PC-3 (cell line): ENCODE measurements at regions of chr17 and their contacts with region 1.

Region 1: GRCh38 chr17:45317112-45317928 is 500 bp upstream of the MAP3K14 start:
- DNase-seq: peak; percentile 100
- ATAC-seq: peak; percentile 49
- H3K4me3 ChIP-seq: peak overlapping the region; percentile 78
- H3K27ac ChIP-seq: peak overlapping the region; percentile 94
- H3K4me1 ChIP-seq: peaks cover 82% of the 10 kb centered on the region
- H3K27me3 ChIP-seq: no peaks in the 10 kb centered on the region
- CTCF ChIP-seq: 0 out of 2 replicates have a peak, but pooled peaks have one; percentile 19

Region 2: GRCh38 chr17:44947461-44948314 is 369.6 kb before region 1 on chr17 and contains the start of gene KIF18B:
- CTCF ChIA-PET with region 1: no interaction called
- POLR2A ChIA-PET with region 1: no interaction called
- intact Hi-C with region 1: no loop called
- DNase-seq: peak; percentile 99
- ATAC-seq: peak; percentile 97
- H3K4me3 ChIP-seq: peak within 1 kb of the TSS; percentile 87
- H3K27ac ChIP-seq: peak within 1 kb of the TSS; percentile 72
- H3K4me1 ChIP-seq: peaks cover 36% of the 10 kb centered on the region
- H3K27me3 ChIP-seq: no peaks in the 10 kb centered on the region
- CTCF ChIP-seq: peak; percentile 37; the same call in 1 of the 2 replicates
- total RNA-seq, gene KIF18B: 25.0 and 28.5 TPM in 2 replicates

Region 3: DNA sequence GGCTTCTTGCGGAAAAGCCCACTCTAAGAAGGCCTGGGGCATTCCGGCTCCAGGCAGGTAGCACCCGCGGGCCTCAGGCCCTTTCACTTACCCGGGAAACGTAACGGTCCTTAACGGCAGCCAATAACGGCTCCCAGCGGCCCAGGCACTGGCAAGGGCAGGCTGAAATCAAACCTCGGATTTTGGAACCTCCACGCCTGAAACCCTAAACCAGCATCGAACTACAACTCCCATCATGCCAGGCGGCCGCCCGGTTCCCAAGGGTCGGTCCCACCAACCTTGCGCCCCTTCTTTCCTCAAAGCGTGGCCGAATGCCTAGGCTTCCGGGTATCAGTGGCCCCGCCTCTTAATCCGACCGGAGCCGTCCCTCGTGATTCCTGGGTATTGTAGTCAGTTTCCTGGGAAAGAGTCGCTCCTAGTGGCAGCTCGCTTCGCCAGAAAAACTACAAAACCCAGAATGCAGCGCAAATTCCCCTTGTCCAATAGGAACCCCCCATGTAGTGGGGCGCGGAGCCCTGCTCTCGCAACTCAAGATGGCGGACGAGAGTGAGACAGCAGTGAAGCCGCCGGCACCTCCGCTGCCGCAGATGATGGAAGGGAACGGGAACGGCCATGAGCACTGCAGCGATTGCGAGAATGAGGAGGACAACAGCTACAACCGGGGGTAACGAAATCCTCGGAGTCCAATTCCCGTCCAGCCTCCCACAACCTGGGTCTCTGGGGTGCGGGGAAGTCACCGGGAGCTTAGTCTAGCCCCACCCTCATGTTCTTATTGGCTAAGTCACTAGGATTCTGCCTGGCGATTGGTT is 256.3 kb before region 1 on chr17 and contains the start of gene NMT1:
- CTCF ChIA-PET with region 1: no interaction called
- POLR2A ChIA-PET with region 1: no interaction called
- intact Hi-C with region 1: no loop called
- DNase-seq: peak; percentile 100
- ATAC-seq: peak; percentile 90
- H3K4me3 ChIP-seq: peak within 1 kb of the TSS; percentile 82
- H3K27ac ChIP-seq: peak within 1 kb of the TSS; percentile 75
- H3K4me1 ChIP-seq: peaks cover 26% of the 10 kb centered on the region
- H3K27me3 ChIP-seq: no peaks in the 10 kb centered on the region
- CTCF ChIP-seq: no peak
- total RNA-seq, gene NMT1: 99.2 and 117 TPM in 2 replicates

Region 4: DNA sequence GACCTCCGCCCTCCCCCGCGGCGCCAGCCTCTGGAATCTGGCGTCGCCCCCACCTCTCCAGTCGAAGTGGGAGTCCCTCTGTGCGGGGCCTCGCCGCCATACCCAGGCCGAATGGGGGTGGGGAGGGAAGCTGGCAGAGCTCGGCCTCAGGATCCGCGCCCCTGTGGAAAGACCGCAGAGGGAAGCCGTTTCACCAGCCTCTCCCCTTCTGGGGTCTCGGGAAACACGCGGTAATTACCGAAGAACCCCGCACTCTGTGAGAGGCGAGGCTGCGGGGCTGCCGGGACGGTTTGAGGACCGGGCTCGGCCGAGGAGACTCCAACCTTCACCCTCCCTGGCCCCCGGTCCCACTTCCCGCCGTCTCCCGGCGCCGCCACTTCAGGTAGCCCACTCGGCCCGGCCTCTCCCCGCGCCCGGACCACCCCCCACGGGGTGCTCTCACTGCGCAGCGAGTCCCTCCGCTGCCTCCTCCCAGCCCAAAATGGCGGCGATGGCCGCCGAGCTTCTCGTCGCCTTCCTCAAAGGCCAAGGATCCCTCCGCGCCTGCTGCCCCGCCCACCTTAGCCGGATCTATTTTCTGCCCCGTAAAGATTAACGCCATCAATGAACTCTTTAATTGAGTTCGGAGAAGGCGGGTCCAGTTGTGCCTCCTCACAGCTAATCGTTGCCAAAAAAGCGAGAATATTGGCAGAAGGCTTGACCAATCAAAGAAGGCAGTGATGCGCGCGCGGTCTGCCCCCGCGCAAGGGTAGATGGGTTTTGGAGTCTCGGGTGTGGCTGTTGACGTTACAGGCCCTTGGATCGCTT is 156.1 kb before region 1 on chr17:
- CTCF ChIA-PET with region 1: no interaction called
- POLR2A ChIA-PET with region 1: interaction called, 10 read pairs
- intact Hi-C with region 1: no loop called
- DNase-seq: peak; percentile 100
- ATAC-seq: peak; percentile 87
- H3K4me3 ChIP-seq: peak overlapping the region; percentile 83
- H3K27ac ChIP-seq: peak overlapping the region; percentile 91
- H3K4me1 ChIP-seq: peaks cover 39% of the 10 kb centered on the region
- H3K27me3 ChIP-seq: no peaks in the 10 kb centered on the region
- CTCF ChIP-seq: no peak; the same call in 1 of the 2 replicates

Region 5: DNA sequence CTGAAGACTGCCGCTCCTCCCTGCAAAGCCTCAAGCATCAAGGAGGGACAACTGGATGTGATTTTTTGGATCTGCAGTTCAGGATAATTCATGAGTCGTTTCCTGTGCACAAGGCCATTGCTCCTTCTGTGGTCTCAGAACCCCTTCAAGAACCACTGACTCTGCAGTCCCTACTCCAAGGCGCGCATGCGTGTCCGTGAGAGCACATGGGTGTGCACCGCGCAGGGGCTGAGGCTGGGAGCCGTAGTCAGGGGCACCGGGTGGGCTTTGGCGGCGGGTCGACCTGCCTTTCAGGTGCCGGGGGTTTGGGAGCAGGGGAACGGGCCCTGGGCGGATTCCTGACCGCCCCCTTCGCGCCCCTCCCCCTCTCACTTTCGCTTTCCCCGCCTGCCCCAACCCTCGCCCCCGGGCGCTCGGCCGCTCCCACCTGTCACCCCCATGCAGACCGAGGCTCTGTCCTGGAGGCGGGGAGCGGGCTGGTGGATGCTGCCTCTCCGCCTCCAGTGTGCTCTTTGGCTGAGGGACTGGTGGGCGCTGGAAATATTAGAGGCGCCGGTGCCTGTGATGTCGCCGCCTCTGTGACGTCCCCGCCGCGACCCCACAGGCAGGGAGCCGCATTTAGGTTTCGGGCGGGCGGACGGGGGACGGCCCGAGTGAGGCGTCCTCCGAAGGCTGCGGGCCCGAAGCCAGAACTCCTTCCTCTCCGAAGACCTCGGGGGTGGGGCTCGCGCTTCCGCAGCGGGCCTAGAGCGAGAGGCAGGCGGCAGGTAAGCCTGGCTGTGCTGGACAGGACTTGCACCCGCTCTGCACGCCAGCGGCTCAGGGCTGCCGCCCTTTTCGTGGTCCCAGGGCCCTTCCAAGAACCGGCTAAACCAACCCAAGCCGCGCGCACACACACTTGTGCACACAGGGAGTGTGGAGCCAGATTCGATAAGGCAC is 55.5 kb before region 1 on chr17 and contains the start of gene SPATA32:
- CTCF ChIA-PET with region 1: no interaction called
- POLR2A ChIA-PET with region 1: no interaction called
- intact Hi-C with region 1: no loop called
- DNase-seq: peak; percentile 62
- ATAC-seq: peak; percentile 52
- H3K4me3 ChIP-seq: peak within 1 kb of the TSS; percentile 59
- H3K27ac ChIP-seq: no peak within 1 kb of the TSS
- H3K4me1 ChIP-seq: peaks cover 26% of the 10 kb centered on the region
- H3K27me3 ChIP-seq: no peaks in the 10 kb centered on the region
- CTCF ChIP-seq: no peak
- total RNA-seq, gene SPATA32: not detected in 2 replicates

Region 6: DNA sequence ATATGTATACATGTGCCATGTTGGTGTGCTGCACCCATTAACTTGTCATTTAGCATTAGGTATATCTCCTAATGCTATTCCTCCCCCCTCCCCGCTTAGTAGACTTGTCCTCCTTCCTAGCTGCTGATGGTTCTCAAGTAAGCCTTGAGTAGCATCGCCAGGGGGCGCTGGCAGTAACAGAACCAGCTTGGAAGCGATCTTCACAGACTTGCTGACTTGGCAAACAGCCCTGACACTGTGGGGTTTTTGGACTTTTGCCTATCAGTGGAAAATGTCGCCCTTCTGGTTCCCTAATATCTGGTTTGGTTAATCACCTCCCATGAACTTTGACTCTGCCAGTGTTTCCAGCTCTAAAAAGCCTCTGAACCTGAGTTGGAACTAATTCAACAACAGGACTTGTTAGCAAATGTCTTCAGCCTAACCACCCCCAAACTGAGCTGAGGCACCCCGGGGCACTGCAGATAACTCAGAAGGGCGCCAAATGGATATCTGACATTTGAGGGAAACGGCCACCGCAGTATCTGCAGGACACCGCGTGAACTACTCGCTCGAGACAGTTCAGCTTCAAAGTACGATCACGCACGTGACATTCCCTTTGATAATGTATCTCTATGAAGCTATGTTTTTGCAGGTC is 40.0 kb before region 1 on chr17:
- CTCF ChIA-PET with region 1: interaction called, 23 read pairs
- POLR2A ChIA-PET with region 1: no interaction called
- intact Hi-C with region 1: loop called (anchors 1 kb)
- DNase-seq: peak; percentile 97
- ATAC-seq: peak; percentile 87
- H3K4me3 ChIP-seq: no peak overlapping the region
- H3K27ac ChIP-seq: no peak overlapping the region
- H3K4me1 ChIP-seq: peaks cover 9% of the 10 kb centered on the region
- H3K27me3 ChIP-seq: no peaks in the 10 kb centered on the region
- CTCF ChIP-seq: peak; percentile 90

Region 7: DNA sequence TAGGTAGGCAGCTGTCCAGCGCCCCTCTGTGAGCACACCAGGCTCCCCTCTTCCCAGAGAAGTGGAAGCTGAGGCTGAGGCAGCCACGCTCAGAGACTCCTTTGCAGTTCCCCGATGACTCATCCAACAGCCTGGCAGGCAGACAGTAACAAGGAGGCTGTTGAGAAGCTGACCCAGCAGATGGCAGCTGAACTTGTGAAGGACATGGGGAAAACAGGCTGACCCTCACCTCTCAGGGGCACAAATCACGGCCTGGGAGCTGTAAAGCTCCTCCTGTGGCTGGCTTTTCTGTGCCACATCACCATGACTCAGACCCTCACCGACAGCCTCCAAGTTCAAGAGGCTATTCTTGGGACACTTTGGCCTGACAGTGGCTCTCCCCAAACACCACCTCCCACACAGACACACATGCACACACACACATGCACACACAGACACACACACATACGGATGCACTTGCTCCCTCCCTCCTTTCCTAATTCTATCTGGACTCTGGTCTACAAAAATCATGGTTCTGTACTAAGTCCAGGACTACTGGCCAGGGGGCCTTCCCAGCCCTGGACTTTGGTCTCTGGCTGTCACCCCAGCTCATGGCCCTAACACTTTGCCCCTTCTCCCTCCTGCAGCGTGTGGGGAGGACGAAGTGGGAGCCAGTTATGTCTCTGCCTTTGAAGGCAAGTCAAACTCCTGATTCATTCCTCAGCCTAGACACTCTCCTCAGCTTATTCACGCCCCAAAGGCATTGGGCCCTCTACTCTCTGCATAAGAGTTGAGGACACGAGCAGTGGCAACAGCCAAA is 23.7 kb before region 1 on chr17:
- CTCF ChIA-PET with region 1: interaction called, 8 read pairs
- POLR2A ChIA-PET with region 1: interaction called, 4 read pairs
- intact Hi-C with region 1: loop called (anchors 1 kb)
- DNase-seq: peak; percentile 90
- ATAC-seq: peak; percentile 77
- H3K4me3 ChIP-seq: no peak overlapping the region
- H3K27ac ChIP-seq: peak overlapping the region; percentile 72
- H3K4me1 ChIP-seq: peaks cover 52% of the 10 kb centered on the region
- H3K27me3 ChIP-seq: no peaks in the 10 kb centered on the region
- CTCF ChIP-seq: peak; percentile 49

Region 8: DNA sequence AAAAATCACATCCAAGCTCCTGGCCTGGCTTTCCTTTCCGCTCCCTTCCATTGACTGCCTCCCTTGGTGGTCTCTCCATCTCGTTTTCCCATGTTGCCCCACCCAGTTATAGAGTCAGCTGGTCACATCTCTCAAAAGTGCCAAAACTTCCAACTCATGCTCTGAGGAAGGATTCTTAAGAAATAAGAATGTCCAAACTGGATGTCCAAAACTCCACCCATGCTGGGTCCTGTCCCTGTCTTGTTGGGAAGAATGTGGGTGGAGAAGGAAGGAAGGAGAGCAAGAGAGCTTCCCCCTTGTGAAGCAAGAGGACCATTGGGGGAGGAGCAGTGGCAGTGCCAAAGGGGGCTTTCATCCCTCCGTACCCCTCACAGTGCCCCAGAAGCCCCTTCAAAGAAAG is 44.1 kb after region 1 on chr17:
- CTCF ChIA-PET with region 1: no interaction called
- POLR2A ChIA-PET with region 1: no interaction called
- intact Hi-C with region 1: no loop called
- DNase-seq: no peak
- ATAC-seq: no peak
- H3K4me3 ChIP-seq: no peak overlapping the region
- H3K27ac ChIP-seq: no peak overlapping the region
- H3K4me1 ChIP-seq: no peaks in the 10 kb centered on the region
- H3K27me3 ChIP-seq: no peaks in the 10 kb centered on the region
- CTCF ChIP-seq: no peak

Region 9: GRCh38 chr17:45371414-45372327 is 54.4 kb after region 1 on chr17:
- CTCF ChIA-PET with region 1: interaction called, 10 read pairs
- POLR2A ChIA-PET with region 1: interaction called, 15 read pairs
- intact Hi-C with region 1: loop called (anchors 1 kb)
- DNase-seq: peak; percentile 83
- ATAC-seq: peak; percentile 87
- H3K4me3 ChIP-seq: peak overlapping the region; percentile 22; the same call in 1 of the 2 replicates
- H3K27ac ChIP-seq: peak overlapping the region; percentile 83
- H3K4me1 ChIP-seq: peaks cover 15% of the 10 kb centered on the region
- H3K27me3 ChIP-seq: no peaks in the 10 kb centered on the region
- CTCF ChIP-seq: no peak

Region 10: GRCh38 chr17:45385331-45385997 is 68.1 kb after region 1 on chr17:
- CTCF ChIA-PET with region 1: interaction called, 8 read pairs
- POLR2A ChIA-PET with region 1: interaction called, 3 read pairs
- intact Hi-C with region 1: loop called (anchors 2 kb)
- DNase-seq: peak; percentile 97
- ATAC-seq: peak; percentile 97
- H3K4me3 ChIP-seq: no peak overlapping the region
- H3K27ac ChIP-seq: no peak overlapping the region
- H3K4me1 ChIP-seq: peaks cover 14% of the 10 kb centered on the region
- H3K27me3 ChIP-seq: no peaks in the 10 kb centered on the region
- CTCF ChIP-seq: peak; percentile 99

Region 11: DNA sequence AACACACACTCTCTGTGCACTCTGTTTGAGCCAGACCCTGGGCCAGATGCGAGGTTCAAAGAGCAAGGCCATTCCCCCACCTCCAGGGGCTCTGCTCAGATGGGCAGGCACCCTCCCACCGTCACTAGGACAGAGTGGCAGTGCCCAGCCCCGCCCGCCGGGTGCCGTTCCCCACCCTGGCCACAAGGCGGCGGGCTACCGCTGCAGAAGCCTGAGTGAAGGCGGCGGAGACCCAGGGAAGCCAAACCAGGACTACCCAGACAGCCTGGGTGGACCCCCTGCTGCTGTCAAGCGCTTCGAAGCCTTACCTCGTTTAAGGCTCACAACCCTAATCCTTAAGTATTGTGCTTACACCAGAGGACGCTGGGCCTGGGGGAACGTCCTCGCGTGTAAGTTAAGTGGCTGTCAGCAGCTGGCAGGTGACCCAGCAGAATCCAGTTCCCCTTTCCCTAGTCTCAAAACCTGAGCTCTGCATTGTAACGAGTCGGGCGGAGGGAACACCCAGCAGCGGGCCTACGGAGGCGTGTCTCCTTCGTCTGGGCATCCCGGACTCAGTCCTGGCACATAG is 110.8 kb after region 1 on chr17:
- CTCF ChIA-PET with region 1: interaction called, 6 read pairs
- POLR2A ChIA-PET with region 1: interaction called, 5 read pairs
- intact Hi-C with region 1: loop called (anchors 2 kb)
- DNase-seq: peak; percentile 87
- ATAC-seq: peak; percentile 11
- H3K4me3 ChIP-seq: peak overlapping the region; percentile 45; the same call in 1 of the 2 replicates
- H3K27ac ChIP-seq: no peak overlapping the region
- H3K4me1 ChIP-seq: peaks cover 57% of the 10 kb centered on the region
- H3K27me3 ChIP-seq: no peaks in the 10 kb centered on the region
- CTCF ChIP-seq: peak; percentile 97